Activated T-helper 1 cell treated with anti-CD3 and anti-CD28 coated beads, Interleukin-12 subunit alpha, Interleukin-12 subunit beta, Interleukin-2, Interleukin-4 antibody, amounts not matched to agents 30 ng/mL and 10 ng/mL and 1 ng/mL, durations not matched to agents 14 hours and 24 hours and 36 hours (primary cell): ENCODE measurements at regions of chr9 and their contacts with region 1.

Region 1: GRCh38 chr9:77916410-77916819 is 115.2 kb downstream of the GNAQ start:
- DNase-seq: no peak
- H3K4me3 Mint-ChIP-seq: peak overlapping the region; percentile 8
- H3K27ac Mint-ChIP-seq: peak overlapping the region; percentile 86
- H3K4me1 Mint-ChIP-seq: peaks cover 47% of the 10 kb centered on the region
- H3K27me3 Mint-ChIP-seq: no peaks in the 10 kb centered on the region

Region 2: GRCh38 chr9:77038281-77039036 is 878.0 kb before region 1 on chr9:
- intact Hi-C with region 1: no loop called
- DNase-seq: no peak
- H3K4me3 Mint-ChIP-seq: no peak overlapping the region
- H3K27ac Mint-ChIP-seq: no peak overlapping the region
- H3K4me1 Mint-ChIP-seq: no peaks in the 10 kb centered on the region
- H3K27me3 Mint-ChIP-seq: peaks cover 5% of the 10 kb centered on the region

Region 3: DNA sequence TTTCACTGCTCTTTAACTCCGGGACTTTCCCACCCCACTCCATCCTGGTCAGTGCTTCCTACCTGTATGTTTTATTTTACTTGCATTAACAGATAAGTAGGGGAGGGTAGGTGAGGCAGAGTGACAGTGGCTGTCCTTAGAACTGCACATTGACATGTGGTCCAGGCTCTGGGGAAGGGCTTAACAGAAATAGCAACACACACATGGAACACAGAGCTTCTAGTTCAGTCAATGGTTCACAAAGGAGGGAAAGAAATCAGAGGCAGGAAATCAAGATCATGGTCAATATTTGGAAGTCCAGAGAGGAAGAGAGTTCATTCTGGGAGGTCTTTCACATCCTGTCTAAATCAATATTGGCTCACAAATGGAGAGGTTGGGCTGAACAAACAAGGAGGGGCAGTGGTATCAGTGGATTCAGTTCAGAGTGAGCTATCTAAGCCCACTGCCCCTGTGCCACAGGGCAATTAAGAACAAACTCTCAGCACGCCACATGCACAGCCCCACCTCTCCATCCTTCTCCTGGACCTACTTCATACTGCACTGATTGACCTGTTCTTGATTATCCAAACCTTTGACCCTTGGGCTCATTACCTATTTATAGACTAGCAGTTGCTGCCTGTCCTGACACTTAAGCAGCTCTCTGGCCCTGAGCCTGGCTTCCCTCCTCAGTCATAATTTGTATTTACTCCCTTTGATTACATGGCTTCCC is 745.3 kb before region 1 on chr9:
- intact Hi-C with region 1: no loop called
- DNase-seq: no peak
- H3K4me3 Mint-ChIP-seq: no peak overlapping the region
- H3K27ac Mint-ChIP-seq: no peak overlapping the region
- H3K4me1 Mint-ChIP-seq: no peaks in the 10 kb centered on the region
- H3K27me3 Mint-ChIP-seq: peaks cover 22% of the 10 kb centered on the region

Region 4: DNA sequence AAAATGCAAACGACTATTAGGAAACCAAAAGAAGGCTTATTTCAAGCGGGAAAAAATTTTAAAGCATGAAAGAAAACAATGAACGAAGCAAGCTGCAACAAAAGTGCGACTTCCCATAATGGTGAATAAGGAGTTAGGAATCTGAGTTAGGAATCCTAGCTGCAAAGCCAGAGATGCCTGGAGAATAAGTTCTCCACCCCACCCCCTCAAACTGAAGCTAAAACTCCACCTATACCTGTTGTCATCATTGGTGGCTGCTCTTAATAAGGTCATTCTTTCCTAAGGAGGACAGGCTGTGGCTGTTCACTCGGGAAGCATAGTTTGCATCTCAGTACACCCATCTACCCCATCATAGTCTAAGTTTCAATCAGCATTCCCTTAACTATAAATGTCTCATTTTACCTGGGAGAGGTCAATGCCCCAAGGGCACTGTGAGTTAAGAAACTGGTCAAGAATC is 32.0 kb before region 1 on chr9:
- intact Hi-C with region 1: loop called (anchors 5 kb)
- DNase-seq: no peak
- H3K4me3 Mint-ChIP-seq: no peak overlapping the region
- H3K27ac Mint-ChIP-seq: peak overlapping the region; percentile 57
- H3K4me1 Mint-ChIP-seq: peaks cover 36% of the 10 kb centered on the region
- H3K27me3 Mint-ChIP-seq: no peaks in the 10 kb centered on the region

Region 5: GRCh38 chr9:77965445-77966123 is 49.2 kb after region 1 on chr9:
- intact Hi-C with region 1: no loop called
- DNase-seq: no peak
- H3K4me3 Mint-ChIP-seq: no peak overlapping the region
- H3K27ac Mint-ChIP-seq: no peak overlapping the region
- H3K4me1 Mint-ChIP-seq: peaks cover 30% of the 10 kb centered on the region
- H3K27me3 Mint-ChIP-seq: no peaks in the 10 kb centered on the region

Region 6: DNA sequence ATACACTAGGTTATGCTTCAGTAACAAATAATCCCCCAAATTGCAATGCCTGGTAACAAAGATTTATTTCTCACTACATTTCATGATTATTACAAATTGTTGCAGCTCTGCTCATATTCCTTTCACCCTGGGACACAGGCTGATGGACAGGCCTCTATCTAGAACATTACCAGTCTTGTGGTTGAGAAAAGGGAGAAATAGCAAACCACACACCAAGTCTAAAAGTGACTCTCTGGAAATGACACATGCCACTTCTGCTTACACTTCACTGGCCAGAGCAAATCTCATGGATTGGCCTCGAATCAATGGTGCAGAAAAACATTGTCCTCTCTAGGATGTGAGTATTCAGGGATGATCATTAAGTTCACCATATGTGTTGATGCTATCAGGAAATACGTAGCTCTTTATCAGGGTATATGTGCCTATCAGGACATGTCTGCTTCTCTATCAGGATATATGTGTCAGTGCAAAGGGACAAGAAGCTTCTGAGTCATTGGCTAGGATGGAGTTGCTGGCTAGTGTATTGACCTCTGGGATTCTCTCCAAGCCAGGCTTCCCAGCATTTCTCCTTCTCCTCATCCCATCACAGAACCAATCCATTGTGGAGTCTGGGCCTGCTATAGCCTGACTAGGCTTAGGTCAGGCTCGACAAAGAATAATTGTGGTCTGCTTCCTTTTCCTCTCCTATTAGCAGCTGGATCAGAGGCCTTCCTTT is 228.4 kb after region 1 on chr9:
- intact Hi-C with region 1: no loop called
- DNase-seq: no peak
- H3K4me3 Mint-ChIP-seq: no peak overlapping the region
- H3K27ac Mint-ChIP-seq: no peak overlapping the region
- H3K4me1 Mint-ChIP-seq: no peaks in the 10 kb centered on the region
- H3K27me3 Mint-ChIP-seq: peaks cover 2% of the 10 kb centered on the region